ENCODE measurements at regions of chr6 and their contacts with region 1.

Region 1: GRCh38 chr6:107154801-107155160 is 39.5 kb upstream of the BEND3 start:
- DNase-seq: no peak

Region 2: GRCh38 chr6:107192830-107193229 is 38.0 kb after region 1 on chr6:
- intact Hi-C with region 1: no loop called
- DNase-seq: no peak

Region 3: DNA sequence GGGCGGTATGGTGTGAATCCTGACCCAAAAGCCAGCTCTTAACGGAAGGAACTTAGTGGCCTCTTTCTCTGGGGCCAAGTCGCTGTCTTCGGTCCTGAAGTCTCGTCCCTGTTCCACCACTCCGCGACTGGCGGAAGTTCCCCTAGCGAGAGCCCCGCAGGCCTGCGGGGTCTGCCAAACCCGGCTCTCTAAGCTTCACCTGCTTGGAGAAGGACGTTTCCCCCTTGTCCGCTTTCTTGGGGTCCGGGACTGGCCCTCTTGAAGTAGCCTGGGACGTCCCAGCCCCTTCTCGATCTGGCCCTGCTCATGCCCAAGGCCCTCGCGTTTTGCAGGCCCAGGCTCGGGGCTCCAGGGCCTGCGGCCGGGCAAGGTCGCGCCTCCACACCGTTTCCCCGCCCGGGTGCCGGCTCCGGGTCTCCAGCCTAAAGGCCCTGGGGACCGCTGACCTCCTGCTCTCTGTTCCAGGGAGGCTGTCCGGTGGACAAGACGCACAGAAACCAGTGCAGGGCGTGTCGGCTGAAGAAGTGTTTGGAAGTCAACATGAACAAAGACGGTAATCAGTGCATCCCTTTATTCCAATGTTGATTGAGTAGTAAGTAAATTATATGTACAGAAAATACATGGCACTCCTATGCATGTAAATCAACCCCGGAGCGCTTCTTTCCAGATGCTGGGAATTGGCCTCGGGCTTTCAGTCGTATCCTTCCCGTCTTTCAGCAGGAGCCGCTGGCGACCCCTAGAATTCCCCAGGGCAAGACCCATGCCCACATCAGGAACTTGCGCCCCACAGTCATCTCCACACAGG is 1019.8 kb after region 1 on chr6:
- intact Hi-C with region 1: loop called in 1 of 2 experiments (anchors 5 kb)
- DNase-seq: no peak